Psoas muscle (tissue), 8 donors: ENCODE measurements at regions of chr2 and their contacts with region 1.

Region 1: GRCh38 chr2:73075477-73076373 is 4.2 kb upstream of the SFXN5 start:
- DNase-seq: peak; percentile 81 to 92
- ATAC-seq: peak; percentile 64 to 71 (median 70)
- H3K4me3 ChIP-seq: peak overlapping the region; percentile 18
- H3K27ac ChIP-seq: peak overlapping the region; percentile 83
- H3K4me1 ChIP-seq: peaks cover 15% of the 10 kb centered on the region
- H3K27me3 ChIP-seq: no peaks in the 10 kb centered on the region
- CTCF ChIP-seq: no peak

Region 2: DNA sequence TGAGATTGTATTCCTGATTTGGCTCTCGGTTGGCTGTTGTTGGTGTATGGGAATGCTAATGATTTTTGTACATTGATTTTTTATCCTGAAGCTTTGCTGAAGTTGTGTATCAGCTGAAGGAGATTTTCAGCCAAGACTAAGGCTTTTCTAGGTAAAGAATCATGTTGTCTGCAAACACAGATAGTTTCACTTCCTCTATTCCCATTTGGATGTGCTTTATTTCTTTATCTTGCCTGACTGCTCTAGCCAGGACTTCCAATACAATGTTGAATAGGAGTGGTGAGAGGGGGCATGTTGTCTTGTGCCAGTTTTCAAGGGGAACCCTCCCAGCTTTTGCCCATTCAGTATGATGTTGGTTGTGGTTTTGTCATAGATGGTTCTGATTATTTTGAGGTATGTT is 1018.4 kb before region 1 on chr2:
- intact Hi-C with region 1: no loop called
- DNase-seq: no peak
- ATAC-seq: no peak
- H3K4me3 ChIP-seq: no peak overlapping the region
- H3K27ac ChIP-seq: no peak overlapping the region
- H3K4me1 ChIP-seq: no peaks in the 10 kb centered on the region
- H3K27me3 ChIP-seq: no peaks in the 10 kb centered on the region
- CTCF ChIP-seq: no peak

Region 3: GRCh38 chr2:73112913-73113633 is 37.3 kb after region 1 on chr2 and contains the start of gene RAB11FIP5:
- intact Hi-C with region 1: loop called in 1 of 2 experiments (anchors 5 kb)
- DNase-seq: peak; percentile 81 to 82
- ATAC-seq: peak; percentile 78 to 87 (median 84)
- H3K4me3 ChIP-seq: peak within 1 kb of the TSS; percentile 97
- H3K27ac ChIP-seq: peak within 1 kb of the TSS; percentile 74
- H3K4me1 ChIP-seq: peaks cover 21% of the 10 kb centered on the region
- H3K27me3 ChIP-seq: no peaks in the 10 kb centered on the region
- CTCF ChIP-seq: no peak
- total RNA-seq, gene RAB11FIP5: 20.9 to 24.2 (median 23.1) TPM